ENCODE measurements at regions of chr12 and their contacts with region 1.

Region 1: DNA sequence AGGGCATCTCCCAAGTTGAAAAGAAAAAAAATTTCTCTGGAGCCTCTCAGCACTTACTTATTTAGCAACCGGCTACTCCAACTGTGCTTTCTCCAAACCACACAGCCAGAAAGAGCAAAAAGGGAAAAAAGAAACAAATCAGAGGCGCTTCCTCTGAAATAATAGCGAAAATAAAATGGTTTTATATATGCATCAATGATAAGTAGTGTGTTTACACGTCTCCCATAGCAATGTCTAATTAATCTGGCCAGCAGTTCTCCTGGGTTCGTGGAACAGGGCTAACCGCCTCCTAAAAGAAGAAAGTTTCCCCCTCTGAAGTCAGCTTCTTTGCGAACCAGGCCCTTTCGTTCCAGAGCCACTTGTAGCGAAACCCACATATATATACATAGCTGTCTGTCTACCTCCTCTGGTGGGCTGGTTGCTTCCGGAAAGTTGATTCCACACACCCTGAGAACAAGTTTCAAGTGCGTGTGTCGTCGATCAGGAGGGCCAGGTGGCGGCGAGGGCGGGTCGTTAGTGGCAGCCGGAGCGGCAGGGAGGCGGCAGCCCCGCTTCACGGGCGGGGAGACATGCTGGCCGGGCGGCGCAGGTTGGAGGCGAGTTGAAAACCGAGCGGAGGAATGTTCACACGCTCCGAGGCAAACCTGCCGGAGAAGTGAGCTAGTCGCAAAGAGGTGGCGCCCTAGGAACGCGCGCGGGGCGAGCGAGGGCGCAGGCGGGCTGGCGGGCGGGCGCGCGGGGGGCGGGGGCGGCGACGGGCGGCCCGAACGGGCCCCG is 2.7 kb downstream of the PTHLH start:
- DNase-seq: peak; percentile 100
- ATAC-seq: peak; percentile 57
- H3K4me3 ChIP-seq: peak overlapping the region; percentile 68
- H3K27ac ChIP-seq: peak overlapping the region; percentile 76
- H3K4me1 ChIP-seq: peaks cover 78% of the 10 kb centered on the region
- H3K27me3 ChIP-seq: no peaks in the 10 kb centered on the region
- CTCF ChIP-seq: no peak

Region 2: GRCh38 chr12:28023156-28023887 is 53.5 kb after region 1 on chr12:
- CTCF ChIA-PET with region 1: interaction called, 58 read pairs
- POLR2A ChIA-PET with region 1: interaction called, 30 read pairs
- intact Hi-C with region 1: loop called (anchors 1 kb)
- DNase-seq: peak; percentile 100
- ATAC-seq: peak; percentile 72
- H3K4me3 ChIP-seq: no peak overlapping the region
- H3K27ac ChIP-seq: peak overlapping the region; percentile 79
- H3K4me1 ChIP-seq: peaks cover 73% of the 10 kb centered on the region
- H3K27me3 ChIP-seq: no peaks in the 10 kb centered on the region
- CTCF ChIP-seq: no peak

Region 3: GRCh38 chr12:28172434-28173030 is 202.7 kb after region 1 on chr12:
- CTCF ChIA-PET with region 1: interaction called, 3 read pairs
- POLR2A ChIA-PET with region 1: no interaction called
- intact Hi-C with region 1: loop called (anchors 1 kb)
- DNase-seq: peak; percentile 90
- ATAC-seq: peak; percentile 98
- H3K4me3 ChIP-seq: no peak overlapping the region
- H3K27ac ChIP-seq: no peak overlapping the region
- H3K4me1 ChIP-seq: peaks cover 6% of the 10 kb centered on the region; the same call in 1 of the 2 replicates
- H3K27me3 ChIP-seq: no peaks in the 10 kb centered on the region
- CTCF ChIP-seq: peak; percentile 95

Region 4: GRCh38 chr12:28184375-28184774 is 214.6 kb after region 1 on chr12:
- CTCF ChIA-PET with region 1: no interaction called
- POLR2A ChIA-PET with region 1: no interaction called
- intact Hi-C with region 1: no loop called
- DNase-seq: no peak
- ATAC-seq: no peak
- H3K4me3 ChIP-seq: no peak overlapping the region
- H3K27ac ChIP-seq: no peak overlapping the region
- H3K4me1 ChIP-seq: no peaks in the 10 kb centered on the region
- H3K27me3 ChIP-seq: no peaks in the 10 kb centered on the region
- CTCF ChIP-seq: no peak

Region 5: GRCh38 chr12:28710882-28711281 is 741.1 kb after region 1 on chr12:
- CTCF ChIA-PET with region 1: interaction called, 3 read pairs
- POLR2A ChIA-PET with region 1: no interaction called
- intact Hi-C with region 1: loop called (anchors 2 kb)
- DNase-seq: peak; percentile 98
- ATAC-seq: peak; percentile 78
- H3K4me3 ChIP-seq: no peak overlapping the region
- H3K27ac ChIP-seq: peak overlapping the region; percentile 17
- H3K4me1 ChIP-seq: peaks cover 22% of the 10 kb centered on the region
- H3K27me3 ChIP-seq: no peaks in the 10 kb centered on the region
- CTCF ChIP-seq: no peak

Region 6: DNA sequence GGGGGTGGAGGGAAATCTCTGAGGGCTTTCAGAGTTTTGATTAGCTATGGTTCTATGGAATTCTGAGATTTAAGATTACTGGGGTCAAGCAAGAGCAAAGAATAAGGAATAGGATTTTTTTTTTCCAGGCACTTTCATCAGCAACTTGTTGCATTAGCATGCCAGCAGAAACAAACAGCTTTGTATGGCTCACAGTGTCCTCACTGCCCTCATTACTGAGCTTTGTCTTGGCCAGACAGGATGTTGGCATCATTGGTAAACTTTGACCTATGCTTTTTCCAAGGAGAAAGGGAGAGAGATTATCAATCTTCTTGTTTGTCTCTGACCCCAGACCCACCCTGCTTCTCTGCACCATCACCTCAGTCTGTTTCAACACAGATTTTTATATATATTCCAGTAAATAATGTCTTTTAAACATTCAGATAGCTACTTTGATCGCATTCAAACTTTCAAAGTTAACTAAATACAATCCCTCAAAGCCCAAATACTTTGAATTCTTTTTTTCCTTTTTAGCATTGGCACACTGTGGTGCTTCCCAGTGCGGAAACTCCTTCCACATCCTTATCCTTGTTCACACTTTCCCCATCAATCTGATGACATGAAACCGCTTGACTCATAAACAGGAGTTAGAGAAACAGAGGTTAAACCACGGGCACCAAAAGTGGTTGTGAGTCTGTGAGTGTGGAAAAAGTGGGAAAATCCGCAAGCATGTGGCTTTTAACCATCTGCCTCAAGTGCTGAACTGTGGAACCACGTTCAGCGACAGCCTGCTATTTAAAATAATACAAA is 897.1 kb after region 1 on chr12:
- CTCF ChIA-PET with region 1: interaction called, 11 read pairs
- POLR2A ChIA-PET with region 1: interaction called, 11 read pairs
- intact Hi-C with region 1: loop called (anchors 1 kb)
- DNase-seq: no peak
- ATAC-seq: no peak
- H3K4me3 ChIP-seq: no peak overlapping the region
- H3K27ac ChIP-seq: no peak overlapping the region
- H3K4me1 ChIP-seq: peaks cover 37% of the 10 kb centered on the region
- H3K27me3 ChIP-seq: no peaks in the 10 kb centered on the region
- CTCF ChIP-seq: no peak

Region 7: GRCh38 chr12:28963554-28963953 is 993.7 kb after region 1 on chr12:
- CTCF ChIA-PET with region 1: interaction called, 7 read pairs
- POLR2A ChIA-PET with region 1: no interaction called
- intact Hi-C with region 1: loop called (anchors 1 kb)
- DNase-seq: peak; percentile 95
- ATAC-seq: peak; percentile 63
- H3K4me3 ChIP-seq: no peak overlapping the region
- H3K27ac ChIP-seq: no peak overlapping the region
- H3K4me1 ChIP-seq: peaks cover 19% of the 10 kb centered on the region
- H3K27me3 ChIP-seq: no peaks in the 10 kb centered on the region
- CTCF ChIP-seq: peak; percentile 100

Measured in PC-3 (cell line).